ENCODE measurements at regions of chr22 and their contacts with region 1.

Region 1: DNA sequence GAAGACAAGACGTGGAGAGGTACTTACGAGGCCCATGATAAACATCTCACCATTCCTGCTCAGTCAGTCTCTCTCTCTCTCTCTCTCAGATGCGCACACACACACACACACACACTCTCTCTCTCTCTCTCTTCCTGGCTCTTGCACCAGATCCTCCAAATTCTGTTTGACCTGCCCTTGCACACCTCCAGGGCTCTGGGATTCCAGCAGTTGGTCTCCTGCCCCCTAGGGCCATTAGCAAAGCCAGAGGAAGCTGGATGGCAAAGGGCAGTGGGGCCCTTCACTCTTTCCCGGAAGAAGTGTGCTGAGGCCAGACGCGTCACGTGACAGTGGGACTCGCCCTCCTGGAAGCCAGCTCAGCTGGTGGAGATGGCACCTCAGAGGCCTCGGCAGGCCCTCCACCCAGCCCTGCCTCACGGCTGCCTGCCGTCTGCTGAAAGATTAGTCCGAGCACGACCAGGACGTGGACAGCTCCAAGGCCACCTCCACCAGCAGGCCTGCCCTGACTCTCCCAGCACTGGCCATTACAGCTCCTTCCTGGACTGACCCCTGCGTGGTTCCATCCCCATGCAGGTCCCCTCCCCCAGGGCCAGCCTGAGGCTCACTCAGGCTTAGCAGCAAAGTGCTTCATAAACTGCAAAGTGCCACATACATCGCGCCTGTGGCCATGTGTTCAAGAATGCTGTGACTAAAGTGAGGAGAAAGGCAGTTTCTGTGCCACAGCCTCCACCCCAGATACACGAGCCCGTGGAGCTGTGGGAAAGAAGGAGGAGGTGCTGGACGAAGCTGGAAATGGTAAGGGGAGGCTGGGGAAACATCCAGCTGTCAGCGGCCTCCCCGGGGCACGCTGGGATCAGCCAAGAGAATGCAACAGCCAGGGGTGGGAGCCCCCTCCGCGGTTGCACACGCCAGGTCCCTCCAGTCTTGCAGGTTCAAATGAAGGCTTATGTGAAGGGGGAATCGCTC is 3.7 kb downstream of the PDGFB start:
- DNase-seq: peak in 1 of 10 donors; percentile 46
- H3K4me3 ChIP-seq: peak overlapping the region in 56 of 59 donors; percentile 2 to 76 (median 64)
- H3K27ac ChIP-seq: peak overlapping the region in 52 of 59 donors; percentile 1 to 95 (median 76)
- H3K27me3 ChIP-seq: peaks cover 0 to 39% (median 5%) of the 10 kb centered on the region in 45 donors
- CTCF ChIP-seq: no peak

Region 2: GRCh38 chr22:39152511-39153219 is 88.4 kb before region 1 on chr22 and contains the start of gene CBX7:
- intact Hi-C with region 1: loop called in 1 of 2 experiments (anchors 10 kb)
- DNase-seq: peak; percentile 92 to 96 (median 94)
- H3K4me3 ChIP-seq: peak within 1 kb of the TSS; percentile 71 to 99 (median 96)
- H3K27ac ChIP-seq: peak within 1 kb of the TSS; percentile 92 to 100 (median 99)
- H3K27me3 ChIP-seq: no peaks in the 10 kb centered on the region
- CTCF ChIP-seq: peak in 17 of 56 donors; percentile 7 to 43 (median 21)
- total RNA-seq, gene CBX7: 112 to 229 (median 170) TPM

Region 3: GRCh38 chr22:39277155-39277607 is 36.1 kb after region 1 on chr22:
- intact Hi-C with region 1: no loop called
- DNase-seq: no peak
- H3K4me3 ChIP-seq: no peak overlapping the region
- H3K27ac ChIP-seq: no peak overlapping the region
- H3K27me3 ChIP-seq: no peaks in the 10 kb centered on the region
- CTCF ChIP-seq: no peak

Region 4: DNA sequence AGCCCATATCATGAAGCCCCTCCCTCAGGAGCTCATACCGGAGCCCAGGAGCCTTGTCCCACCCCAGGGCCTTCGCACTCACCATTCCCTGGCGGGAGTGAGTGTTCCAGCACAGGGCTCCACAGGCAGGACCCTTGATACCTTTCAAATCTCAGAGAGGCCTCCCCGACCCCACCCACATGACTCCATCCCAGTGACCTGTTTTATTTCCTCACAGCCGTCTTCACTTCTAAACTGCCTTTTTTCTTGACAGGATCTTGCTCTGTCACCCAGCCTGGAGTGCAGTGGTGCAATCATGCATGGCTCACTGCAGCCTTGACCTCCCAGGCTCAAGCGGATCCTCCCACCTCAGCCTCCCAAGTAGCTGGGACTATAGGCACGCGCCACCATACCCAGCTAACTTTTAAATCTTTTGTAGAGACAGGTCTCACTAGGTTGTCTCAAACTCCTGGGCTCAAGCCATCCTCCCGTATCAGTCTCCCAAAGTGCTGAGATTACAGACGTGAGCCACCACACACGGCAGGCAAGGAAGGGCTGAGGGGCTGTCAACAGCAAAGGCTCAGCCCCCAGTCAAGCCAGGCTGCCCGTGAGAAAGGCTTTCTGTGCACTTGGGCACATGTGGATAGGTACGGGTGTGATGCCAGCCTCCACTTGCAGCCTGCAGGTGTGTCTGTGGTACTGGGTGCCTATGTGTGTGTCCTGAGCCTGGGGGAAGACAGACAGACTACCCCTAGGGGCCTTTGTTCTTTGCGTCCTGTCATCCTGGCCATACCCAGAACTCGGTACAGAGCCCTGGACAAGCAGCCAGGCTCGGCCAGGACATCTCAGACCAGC is 69.0 kb after region 1 on chr22:
- intact Hi-C with region 1: loop called in 1 of 2 experiments (anchors 5 kb)
- DNase-seq: no peak
- H3K4me3 ChIP-seq: no peak overlapping the region
- H3K27ac ChIP-seq: peak overlapping the region in 9 of 59 donors; percentile 4 to 58 (median 18)
- H3K27me3 ChIP-seq: no peaks in the 10 kb centered on the region
- CTCF ChIP-seq: no peak

Region 5: GRCh38 chr22:39368461-39368911 is 127.4 kb after region 1 on chr22:
- intact Hi-C with region 1: no loop called
- DNase-seq: no peak
- H3K4me3 ChIP-seq: no peak overlapping the region
- H3K27ac ChIP-seq: peak overlapping the region in 47 of 59 donors; percentile 2 to 96 (median 48)
- H3K27me3 ChIP-seq: no peaks in the 10 kb centered on the region
- CTCF ChIP-seq: no peak

Measured in dorsolateral prefrontal cortex (tissue), 120 donors.